ENCODE measurements at regions of chr3 and their contacts with region 1.

Region 1: DNA sequence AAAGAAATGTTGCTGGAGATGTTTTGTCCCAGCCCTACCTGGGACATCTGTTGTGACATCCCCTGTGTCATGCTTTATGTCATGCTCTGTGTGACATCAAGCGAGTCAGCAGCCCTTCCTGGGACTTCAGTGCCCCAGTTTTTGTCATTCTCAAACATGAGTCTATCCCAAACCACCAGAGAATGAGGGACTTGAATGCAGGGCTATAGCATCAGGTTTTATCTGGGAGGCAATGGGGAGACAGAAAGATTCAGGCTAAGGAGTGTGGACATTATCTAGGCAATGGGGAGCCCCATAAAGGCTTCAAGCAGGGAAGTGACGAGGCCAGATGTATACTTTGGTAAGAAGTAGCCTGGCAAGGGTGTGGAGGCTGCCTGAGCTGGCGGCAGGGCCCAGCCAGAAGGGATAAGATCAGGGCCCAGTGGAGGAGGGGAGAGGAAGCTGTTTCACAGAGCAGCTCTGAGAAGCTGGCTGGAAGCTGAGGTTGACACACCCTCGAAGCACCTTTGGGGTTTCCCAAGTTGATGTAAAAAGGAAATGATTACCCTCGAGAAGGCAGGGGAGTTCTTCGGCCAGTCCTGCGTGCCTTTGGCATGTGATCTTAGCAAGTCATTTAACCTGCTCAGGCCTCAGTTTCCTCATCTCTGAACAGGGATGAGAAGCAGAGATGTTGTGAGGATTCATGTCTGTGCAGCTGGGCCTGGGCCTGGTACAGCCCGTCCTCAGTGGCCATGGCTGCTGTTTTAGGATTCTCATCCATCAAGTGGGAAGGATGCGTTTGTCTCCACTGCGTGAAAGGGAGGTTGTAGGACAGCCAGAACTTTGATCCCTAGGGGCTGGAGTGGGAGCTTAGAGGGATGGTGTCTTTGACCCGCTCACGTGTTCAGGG is 34.3 kb downstream of the IRAK2 start:
- DNase-seq: peak; percentile 30 to 90 (median 74)
- ATAC-seq: peak; percentile 80 to 81 (median 80)
- H3K4me3 ChIP-seq: no peak overlapping the region
- H3K4me3 Mint-ChIP-seq: peak overlapping the region; percentile 49 to 55 (median 50)
- H3K27ac ChIP-seq: peak overlapping the region; percentile 97
- H3K27ac Mint-ChIP-seq: peak overlapping the region; percentile 92 to 95
- H3K4me1 ChIP-seq: peaks cover 38 to 68% of the 10 kb centered on the region in 2 experiments
- H3K4me1 Mint-ChIP-seq: peaks cover 68 to 76% (median 71%) of the 10 kb centered on the region in 3 donors
- H3K27me3 ChIP-seq: no peaks in the 10 kb centered on the region
- H3K27me3 Mint-ChIP-seq: no peaks in the 10 kb centered on the region

Region 2: DNA sequence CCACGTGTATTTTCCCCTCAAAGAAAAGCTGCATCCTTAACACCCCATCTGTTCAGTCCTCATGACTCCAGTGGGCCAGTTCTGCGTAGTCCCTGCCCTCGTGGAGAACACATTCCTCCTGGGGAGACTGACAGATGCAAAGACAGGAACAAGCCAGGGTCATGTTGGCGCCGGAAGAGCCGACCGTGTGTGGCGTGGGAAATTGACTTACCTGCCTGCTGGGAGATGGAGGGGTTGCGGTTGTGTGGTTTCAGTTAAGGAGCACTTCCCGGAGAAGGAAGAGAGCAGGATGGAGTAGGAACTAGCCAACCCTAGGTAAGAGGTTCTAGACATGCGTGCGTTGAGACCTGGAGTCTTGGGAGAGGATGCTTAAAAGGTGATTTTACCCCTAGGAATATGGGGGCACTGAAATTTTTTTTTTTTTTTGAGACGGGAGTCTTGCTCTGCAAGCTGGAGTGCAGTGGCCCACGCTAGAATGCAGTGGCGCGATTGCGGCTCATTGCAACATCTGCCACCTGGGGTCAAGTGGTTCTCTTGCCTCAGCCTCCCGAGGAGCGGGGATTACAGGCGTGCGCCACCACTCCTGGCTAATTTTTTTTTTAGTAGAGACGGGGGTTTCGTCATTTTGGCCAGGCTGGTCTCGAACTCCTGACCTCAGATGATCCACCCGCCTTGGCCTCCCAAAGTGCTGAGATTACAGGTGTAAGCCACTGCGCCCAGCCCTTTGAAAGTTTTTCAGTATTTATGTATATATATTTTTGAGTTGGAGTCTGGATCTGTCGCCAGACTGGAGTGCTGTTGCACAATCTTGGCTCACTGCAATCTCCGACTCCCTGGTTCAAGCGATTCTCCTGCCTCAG is 56.1 kb before region 1 on chr3:
- CTCF ChIA-PET with region 1: interaction called in 1 of 2 experiments, 3 read pairs
- POLR2A ChIA-PET with region 1: interaction called in 1 of 2 experiments, 11 read pairs
- DNase-seq: peak in 5 of 35 experiments; percentile 1 to 47 (median 6)
- ATAC-seq: no peak
- H3K4me3 ChIP-seq: peak overlapping the region; percentile 80 to 92
- H3K4me3 Mint-ChIP-seq: peak overlapping the region; percentile 85 to 88 (median 88)
- H3K27ac ChIP-seq: peak overlapping the region; percentile 86
- H3K27ac Mint-ChIP-seq: peak overlapping the region; percentile 77 to 93
- H3K4me1 ChIP-seq: peaks cover 15 to 50% of the 10 kb centered on the region in 2 experiments
- H3K4me1 Mint-ChIP-seq: peaks cover 35 to 40% (median 39%) of the 10 kb centered on the region in 3 donors
- H3K27me3 ChIP-seq: no peaks in the 10 kb centered on the region
- H3K27me3 Mint-ChIP-seq: no peaks in the 10 kb centered on the region